ENCODE measurements at regions of chr14 and their contacts with region 1.

Region 1: DNA sequence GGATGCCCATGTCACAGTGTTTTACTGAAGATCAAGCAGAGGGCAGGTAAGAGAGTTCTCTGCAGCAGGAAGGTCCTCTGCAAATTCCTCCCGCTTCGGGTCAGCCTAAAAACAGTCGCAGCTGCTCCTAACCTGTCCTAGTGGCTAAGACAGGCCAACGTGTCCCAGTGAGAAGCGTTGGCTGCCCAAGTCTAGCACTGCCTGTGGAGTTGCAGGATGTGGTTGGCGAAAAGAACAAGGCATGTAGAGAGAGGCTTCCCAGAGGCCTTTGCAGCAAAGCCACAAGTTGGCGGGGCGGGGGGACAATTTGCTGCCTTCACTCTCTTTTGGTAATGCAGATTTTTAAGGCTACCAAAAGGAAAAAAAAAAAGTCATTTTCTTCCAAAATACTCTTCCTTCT is 340.1 kb downstream of the BCL11B start:
- DNase-seq: peak; percentile 57 to 89 (median 80)
- ATAC-seq: peak; percentile 96
- H3K4me3 ChIP-seq: peak overlapping the region; percentile 15 to 16
- H3K4me3 Mint-ChIP-seq: peak overlapping the region; percentile 74
- H3K27ac ChIP-seq: peak overlapping the region in 1 of 2 experiments; percentile 22
- H3K27ac Mint-ChIP-seq: peak overlapping the region; percentile 92
- H3K4me1 ChIP-seq: peaks cover 79% of the 10 kb centered on the region
- H3K4me1 Mint-ChIP-seq: peaks cover 93% of the 10 kb centered on the region
- H3K27me3 ChIP-seq: no peaks in the 10 kb centered on the region
- H3K27me3 Mint-ChIP-seq: no peaks in the 10 kb centered on the region
- CTCF ChIP-seq: no peak

Region 2: DNA sequence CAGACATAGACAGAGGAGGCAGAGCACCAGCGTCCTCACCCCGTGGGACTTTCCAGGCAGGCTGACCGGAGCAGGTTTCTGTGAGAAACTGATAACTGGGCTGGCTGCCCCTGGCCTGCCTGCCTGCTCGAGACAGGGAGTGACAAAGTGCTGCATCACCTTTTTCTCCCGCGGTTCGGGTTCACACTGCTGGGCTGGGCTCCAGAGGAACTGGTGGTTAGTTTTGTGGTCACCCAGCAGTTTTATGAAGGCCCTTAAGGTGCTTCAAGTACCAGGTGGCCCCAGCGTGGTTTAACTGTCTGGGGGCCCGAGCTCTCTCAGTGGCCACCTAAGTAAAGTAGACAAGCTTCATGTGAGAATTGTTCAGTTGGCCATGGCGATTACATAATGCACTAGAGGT is 733.5 kb before region 1 on chr14:
- CTCF ChIA-PET with region 1: no interaction called
- POLR2A ChIA-PET with region 1: no interaction called
- intact Hi-C with region 1: loop called in 1 of 2 experiments (anchors 10 kb)
- DNase-seq: peak in 7 of 9 experiments; percentile 35 to 79 (median 60)
- ATAC-seq: peak; percentile 42
- H3K4me3 ChIP-seq: peak overlapping the region in 1 of 2 experiments; percentile 12
- H3K4me3 Mint-ChIP-seq: peak overlapping the region; percentile 54
- H3K27ac ChIP-seq: peak overlapping the region in 1 of 2 experiments; percentile 51
- H3K27ac Mint-ChIP-seq: peak overlapping the region; percentile 85
- H3K4me1 ChIP-seq: peaks cover 68% of the 10 kb centered on the region
- H3K4me1 Mint-ChIP-seq: peaks cover 93% of the 10 kb centered on the region
- H3K27me3 ChIP-seq: no peaks in the 10 kb centered on the region
- H3K27me3 Mint-ChIP-seq: no peaks in the 10 kb centered on the region
- CTCF ChIP-seq: no peak

Region 3: GRCh38 chr14:98840091-98840490 is 91.8 kb before region 1 on chr14:
- CTCF ChIA-PET with region 1: no interaction called
- POLR2A ChIA-PET with region 1: no interaction called
- intact Hi-C with region 1: no loop called
- DNase-seq: no peak
- ATAC-seq: no peak
- H3K4me3 ChIP-seq: no peak overlapping the region
- H3K4me3 Mint-ChIP-seq: no peak overlapping the region
- H3K27ac ChIP-seq: no peak overlapping the region
- H3K27ac Mint-ChIP-seq: no peak overlapping the region
- H3K4me1 ChIP-seq: peaks cover 4% of the 10 kb centered on the region
- H3K4me1 Mint-ChIP-seq: peaks cover 9% of the 10 kb centered on the region
- H3K27me3 ChIP-seq: no peaks in the 10 kb centered on the region
- H3K27me3 Mint-ChIP-seq: peaks cover 3% of the 10 kb centered on the region
- CTCF ChIP-seq: no peak

Region 4: DNA sequence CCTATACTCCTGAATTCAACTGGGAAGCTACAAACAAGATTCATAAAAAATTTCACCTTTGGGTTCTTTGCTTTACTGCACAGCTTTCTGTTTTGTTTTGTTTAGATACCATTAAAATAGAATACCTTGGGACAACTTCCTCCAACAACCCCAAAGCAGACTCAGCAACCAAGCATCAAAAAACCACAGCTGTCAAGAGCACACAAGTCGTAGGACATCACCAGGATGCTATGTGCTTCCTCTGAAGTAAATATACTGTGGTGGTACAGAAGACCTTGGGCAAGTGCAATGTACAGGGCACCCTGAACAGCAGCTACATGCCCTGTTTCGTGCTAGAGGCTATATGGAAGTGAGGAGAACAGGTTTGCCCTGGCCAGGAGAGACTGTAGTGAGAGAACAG is 19.3 kb before region 1 on chr14:
- CTCF ChIA-PET with region 1: interaction called, 4 read pairs
- POLR2A ChIA-PET with region 1: interaction called, 16 read pairs
- intact Hi-C with region 1: loop called in 1 of 2 experiments (anchors 1 kb)
- DNase-seq: peak in 4 of 9 experiments; percentile 21 to 60 (median 42)
- ATAC-seq: peak; percentile 73
- H3K4me3 ChIP-seq: no peak overlapping the region
- H3K4me3 Mint-ChIP-seq: no peak overlapping the region
- H3K27ac ChIP-seq: peak overlapping the region in 1 of 2 experiments; percentile 13
- H3K27ac Mint-ChIP-seq: peak overlapping the region; percentile 6
- H3K4me1 ChIP-seq: peaks cover 14% of the 10 kb centered on the region
- H3K4me1 Mint-ChIP-seq: peaks cover 31% of the 10 kb centered on the region
- H3K27me3 ChIP-seq: no peaks in the 10 kb centered on the region
- H3K27me3 Mint-ChIP-seq: no peaks in the 10 kb centered on the region
- CTCF ChIP-seq: no peak

Region 5: DNA sequence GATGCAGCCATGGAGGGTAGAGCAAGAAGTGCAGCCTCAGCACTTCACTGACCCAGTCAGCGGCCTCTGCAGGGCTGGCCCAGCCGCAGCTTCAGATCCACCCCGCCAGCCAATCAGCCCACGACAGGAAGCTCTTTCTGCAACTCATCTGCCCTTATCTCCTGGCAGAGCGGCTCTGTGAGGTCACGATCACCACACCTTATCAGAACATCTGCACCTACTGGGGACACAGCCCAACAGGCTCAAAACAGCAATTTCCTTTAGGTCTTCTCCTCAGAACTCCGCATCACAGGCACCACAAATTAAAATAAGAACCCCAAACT is 52.8 kb after region 1 on chr14:
- CTCF ChIA-PET with region 1: no interaction called
- POLR2A ChIA-PET with region 1: interaction called, 3 read pairs
- intact Hi-C with region 1: loop called in 1 of 2 experiments (anchors 5 kb)
- DNase-seq: peak; percentile 45 to 84 (median 72)
- ATAC-seq: peak; percentile 93
- H3K4me3 ChIP-seq: no peak overlapping the region
- H3K4me3 Mint-ChIP-seq: peak overlapping the region; percentile 80
- H3K27ac ChIP-seq: peak overlapping the region; percentile 25 to 65
- H3K27ac Mint-ChIP-seq: peak overlapping the region; percentile 94
- H3K4me1 ChIP-seq: peaks cover 31% of the 10 kb centered on the region
- H3K4me1 Mint-ChIP-seq: peaks cover 40% of the 10 kb centered on the region
- H3K27me3 ChIP-seq: no peaks in the 10 kb centered on the region
- H3K27me3 Mint-ChIP-seq: no peaks in the 10 kb centered on the region
- CTCF ChIP-seq: no peak

Region 6: DNA sequence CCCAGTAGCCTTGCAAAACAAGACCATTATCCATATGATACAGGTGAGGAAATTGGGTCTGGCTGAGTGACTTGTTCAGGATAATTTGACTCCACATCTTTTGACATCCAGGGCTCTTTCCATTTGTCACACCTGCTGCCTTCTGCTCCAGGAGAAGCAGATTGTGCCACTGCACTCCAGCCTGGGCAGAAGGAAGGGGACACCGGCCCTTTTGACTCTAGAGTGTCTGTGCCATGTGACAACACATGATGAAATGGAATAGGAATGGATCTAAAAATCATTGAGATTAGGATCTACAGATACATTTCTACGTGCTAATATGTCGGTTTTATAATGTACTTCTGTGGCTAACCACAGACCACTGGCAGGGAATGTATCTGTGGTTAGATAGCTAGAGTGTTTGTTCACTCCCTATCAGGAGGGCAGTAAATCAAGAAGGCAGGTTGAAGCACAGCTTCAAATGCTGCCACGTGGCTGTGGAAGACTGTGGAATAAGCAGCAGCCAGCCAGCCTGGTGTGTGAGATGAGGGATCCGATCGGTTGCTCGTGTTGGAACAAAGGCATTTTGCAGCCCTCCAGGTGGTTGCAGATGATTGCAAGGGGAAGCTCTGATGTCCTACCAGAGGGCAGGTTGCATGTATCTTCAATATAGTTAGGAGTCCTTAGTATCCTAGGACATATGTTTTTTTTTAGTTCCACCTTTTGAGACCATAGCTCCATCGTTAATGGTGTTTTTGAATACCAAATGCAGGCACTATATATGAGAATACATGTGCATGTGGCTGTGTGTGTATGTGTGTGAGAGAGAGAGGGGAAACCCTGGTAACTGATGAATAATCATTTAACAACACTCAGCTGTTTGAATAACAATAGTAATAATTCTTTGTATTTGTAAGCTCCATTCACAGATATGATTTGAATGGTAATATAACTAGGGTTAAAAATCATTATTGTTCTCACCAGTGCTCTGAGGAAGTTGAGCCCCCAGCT is 889.9 kb after region 1 on chr14:
- CTCF ChIA-PET with region 1: no interaction called
- POLR2A ChIA-PET with region 1: no interaction called
- intact Hi-C with region 1: no loop called
- DNase-seq: peak in 2 of 9 experiments; percentile 26 to 31
- ATAC-seq: no peak
- H3K4me3 ChIP-seq: no peak overlapping the region
- H3K4me3 Mint-ChIP-seq: no peak overlapping the region
- H3K27ac ChIP-seq: no peak overlapping the region
- H3K27ac Mint-ChIP-seq: no peak overlapping the region
- H3K4me1 ChIP-seq: peaks cover 7% of the 10 kb centered on the region
- H3K4me1 Mint-ChIP-seq: peaks cover 22% of the 10 kb centered on the region
- H3K27me3 ChIP-seq: no peaks in the 10 kb centered on the region
- H3K27me3 Mint-ChIP-seq: peaks cover 31% of the 10 kb centered on the region
- CTCF ChIP-seq: no peak

Measured in CD8-positive, alpha-beta T cell (primary cell).